Psoas muscle (tissue), 8 donors: ENCODE measurements at regions of chr12 and their contacts with region 1.

Region 1: DNA sequence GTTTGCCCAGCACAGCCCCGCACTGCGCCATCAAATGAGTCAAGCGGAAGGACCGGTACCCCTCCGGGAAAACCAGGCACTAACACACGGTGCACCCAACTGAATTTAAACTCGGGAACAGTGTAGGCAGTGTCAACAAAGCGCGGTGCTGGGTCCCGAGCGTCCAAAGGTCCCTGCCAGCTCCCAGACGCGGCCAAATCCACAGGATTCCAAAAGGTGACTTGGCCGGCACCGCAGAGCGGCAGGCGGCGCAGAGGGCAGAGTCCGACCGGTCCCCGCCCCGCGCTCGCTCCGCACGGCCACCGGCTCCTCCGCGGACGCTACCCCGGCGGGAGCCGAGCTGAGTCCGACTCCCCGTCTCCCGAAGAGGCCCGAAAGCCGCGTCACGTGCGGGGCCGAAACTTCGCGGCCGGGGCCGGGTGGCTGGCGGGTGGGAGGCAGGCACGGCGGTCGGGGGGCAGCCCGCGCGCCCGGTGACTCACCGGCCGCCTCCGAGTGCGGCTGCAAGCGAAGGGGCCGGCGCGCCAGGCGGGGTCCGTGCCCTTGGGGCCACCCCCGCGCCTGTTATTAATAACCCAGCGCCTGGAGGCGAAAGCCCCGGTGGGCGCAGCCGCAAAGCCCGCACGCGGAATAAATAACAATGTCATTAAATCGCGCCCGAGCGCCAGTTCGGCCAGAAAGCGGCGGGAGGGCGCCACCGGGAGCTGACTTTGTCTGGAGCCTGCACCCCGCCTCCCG is 863 bp downstream of the DENND5B start:
- DNase-seq: peak; percentile 69 to 84
- ATAC-seq: peak; percentile 66 to 76 (median 72)
- H3K4me3 ChIP-seq: peak overlapping the region; percentile 76
- H3K27ac ChIP-seq: peak overlapping the region; percentile 96
- H3K4me1 ChIP-seq: peaks cover 27% of the 10 kb centered on the region
- H3K27me3 ChIP-seq: no peaks in the 10 kb centered on the region
- CTCF ChIP-seq: no peak

Region 2: GRCh38 chr12:31406345-31406744 is 183.7 kb before region 1 on chr12:
- intact Hi-C with region 1: loop called in 1 of 2 experiments (anchors 2 kb)
- DNase-seq: no peak
- ATAC-seq: no peak
- H3K4me3 ChIP-seq: no peak overlapping the region
- H3K27ac ChIP-seq: no peak overlapping the region
- H3K4me1 ChIP-seq: peaks cover 7% of the 10 kb centered on the region
- H3K27me3 ChIP-seq: no peaks in the 10 kb centered on the region
- CTCF ChIP-seq: no peak

Region 3: GRCh38 chr12:31524791-31525495 is 65.1 kb before region 1 on chr12:
- intact Hi-C with region 1: loop called in 1 of 2 experiments (anchors 5 kb)
- DNase-seq: no peak
- ATAC-seq: peak; percentile 42 to 56 (median 50)
- H3K4me3 ChIP-seq: no peak overlapping the region
- H3K27ac ChIP-seq: no peak overlapping the region
- H3K4me1 ChIP-seq: peaks cover 34% of the 10 kb centered on the region
- H3K27me3 ChIP-seq: no peaks in the 10 kb centered on the region
- CTCF ChIP-seq: no peak

Region 4: DNA sequence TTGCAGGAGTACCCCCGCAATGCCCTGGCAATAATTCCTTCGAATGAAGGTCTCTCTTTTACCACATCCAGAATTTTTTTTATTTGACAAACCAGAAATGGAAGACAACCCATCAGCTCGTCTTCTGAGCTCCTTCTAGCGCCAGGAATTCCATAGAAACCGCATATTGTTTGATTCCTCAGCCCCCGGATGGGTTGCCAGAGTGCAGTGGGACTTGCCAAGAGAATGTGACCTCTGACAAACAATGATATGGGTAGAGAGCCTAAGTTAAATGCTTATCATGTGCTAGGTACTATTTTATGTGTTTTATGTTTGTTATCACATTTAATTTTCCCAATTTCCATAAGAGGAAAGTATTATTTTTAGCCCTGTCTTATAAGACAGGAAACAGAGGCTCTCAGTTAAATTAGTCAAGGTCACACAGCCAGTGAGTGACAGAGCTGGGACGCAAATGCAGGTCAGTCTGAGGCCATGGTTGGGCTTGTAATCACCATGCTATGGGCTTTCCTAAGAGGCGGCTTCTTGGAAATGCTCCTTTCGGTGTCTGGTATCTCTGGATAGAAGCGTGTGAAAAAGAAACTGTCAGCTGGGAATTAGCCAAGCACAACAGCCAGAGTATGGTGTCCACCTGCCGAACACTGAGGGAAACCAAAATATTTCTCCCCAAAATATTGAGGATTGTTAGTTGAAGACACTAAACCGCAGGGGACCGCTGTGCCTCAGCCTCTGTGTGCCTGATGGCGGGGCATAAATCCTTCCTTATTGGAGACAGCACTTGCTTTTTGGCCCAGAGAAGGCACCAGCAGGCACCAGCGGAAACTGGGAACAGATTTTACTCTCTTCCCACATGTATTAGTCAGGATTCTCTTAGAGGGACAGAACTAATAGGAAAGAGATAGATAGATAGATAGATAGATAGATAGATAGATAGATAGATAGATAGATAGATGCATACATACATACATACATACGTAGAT is 40.0 kb after region 1 on chr12:
- intact Hi-C with region 1: loop called in 1 of 2 experiments (anchors 2 kb)
- DNase-seq: peak; percentile 21 to 57
- ATAC-seq: peak; percentile 92 to 98 (median 98)
- H3K4me3 ChIP-seq: peak overlapping the region; percentile 44
- H3K27ac ChIP-seq: peak overlapping the region; percentile 60
- H3K4me1 ChIP-seq: peaks cover 7% of the 10 kb centered on the region
- H3K27me3 ChIP-seq: no peaks in the 10 kb centered on the region
- CTCF ChIP-seq: no peak

Region 5: DNA sequence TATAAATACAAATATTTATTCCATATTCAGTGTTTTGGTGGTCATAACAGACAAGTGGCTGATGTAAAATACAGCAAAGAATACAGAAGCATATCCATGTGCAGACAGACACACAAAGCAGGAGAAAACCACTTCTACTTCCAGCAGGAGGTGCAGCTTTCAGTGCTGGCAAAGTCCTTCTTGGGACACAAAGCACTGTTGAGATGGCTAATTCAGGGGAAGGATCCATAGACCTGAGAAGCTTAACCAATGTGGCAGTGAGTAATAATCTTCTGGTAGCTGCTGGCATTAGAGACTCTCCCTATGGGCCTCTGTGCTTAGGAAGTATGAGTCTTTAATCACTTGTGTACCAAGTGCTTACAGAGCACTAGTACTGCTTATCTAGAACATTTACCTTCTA is 112.0 kb after region 1 on chr12:
- intact Hi-C with region 1: no loop called
- DNase-seq: no peak
- ATAC-seq: no peak
- H3K4me3 ChIP-seq: no peak overlapping the region
- H3K27ac ChIP-seq: no peak overlapping the region
- H3K4me1 ChIP-seq: no peaks in the 10 kb centered on the region
- H3K27me3 ChIP-seq: no peaks in the 10 kb centered on the region
- CTCF ChIP-seq: peak; percentile 12